GM12878 (cell line): ENCODE measurements at regions of chr13 and their contacts with region 1.

Region 1: GRCh38 chr13:79003989-79004898 is 345.3 kb upstream of the OBI1 start:
- DNase-seq: no peak
- ATAC-seq: peak; percentile 69
- H3K4me3 ChIP-seq: no peak overlapping the region
- H3K27ac ChIP-seq: no peak overlapping the region
- H3K4me1 ChIP-seq: no peaks in the 10 kb centered on the region
- H3K27me3 ChIP-seq: no peaks in the 10 kb centered on the region
- CTCF ChIP-seq: no peak
- EP300 ChIP-seq: peak; percentile 69 to 78; a peak in 2 of 4 replicates
- POLR2A ChIP-seq: no peak
- RAD21 ChIP-seq: no peak

Region 2: DNA sequence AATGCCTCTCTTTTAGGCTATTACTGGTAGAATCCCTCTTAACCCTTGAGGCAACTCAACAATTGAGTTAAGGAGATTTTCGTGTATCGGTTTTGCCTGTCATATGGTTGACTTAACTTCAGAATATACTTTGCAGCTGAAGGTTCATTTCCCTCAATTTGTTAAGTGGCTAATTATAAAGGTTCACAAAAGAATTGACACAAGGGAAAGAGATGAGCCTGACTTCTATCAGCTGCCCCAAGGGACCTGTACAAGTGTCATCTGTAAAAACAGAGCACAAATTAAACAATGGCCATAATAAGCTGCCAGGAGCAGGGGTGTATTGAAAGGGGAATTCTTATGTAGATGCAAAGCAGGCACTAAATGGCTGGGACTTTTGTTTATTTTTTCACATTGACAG is 10.5 kb before region 1 on chr13:
- CTCF ChIA-PET with region 1: interaction called, 12 read pairs
- POLR2A ChIA-PET with region 1: interaction called, 32 read pairs
- RAD21 ChIA-PET with region 1: interaction called, 69 read pairs
- SMC1A ChIA-PET with region 1: interaction called, 74 read pairs
- in situ Hi-C with region 1: no loop called
- intact Hi-C with region 1: no loop called
- DNase-seq: peak; percentile 21
- ATAC-seq: peak; percentile 76
- H3K4me3 ChIP-seq: no peak overlapping the region
- H3K27ac ChIP-seq: no peak overlapping the region
- H3K4me1 ChIP-seq: no peaks in the 10 kb centered on the region
- H3K27me3 ChIP-seq: no peaks in the 10 kb centered on the region
- CTCF ChIP-seq: no peak
- EP300 ChIP-seq: peak; percentile 75 to 79; a peak in 3 of 4 replicates
- POLR2A ChIP-seq: no peak
- RAD21 ChIP-seq: no peak

Region 3: DNA sequence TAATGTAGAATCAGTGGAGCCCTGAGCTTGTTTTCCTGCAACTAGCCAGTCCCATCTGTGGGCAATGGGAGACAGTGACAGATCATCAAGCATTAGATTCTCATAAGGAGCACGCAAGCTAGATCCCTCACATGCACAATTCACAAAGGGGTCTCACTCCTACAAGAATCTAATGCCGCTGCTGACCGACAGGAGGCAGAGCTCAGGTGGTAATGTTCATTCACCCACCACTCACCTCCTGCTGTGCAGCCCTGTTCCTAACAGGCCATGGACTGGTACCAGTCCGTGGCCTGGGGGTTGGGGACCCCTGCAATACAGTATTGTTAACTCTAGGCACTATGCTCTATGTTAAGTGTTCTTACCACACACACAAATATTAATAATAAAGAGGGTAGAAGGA is 39.0 kb after region 1 on chr13:
- CTCF ChIA-PET with region 1: no interaction called
- POLR2A ChIA-PET with region 1: no interaction called
- RAD21 ChIA-PET with region 1: interaction called, 12 read pairs
- SMC1A ChIA-PET with region 1: interaction called, 14 read pairs
- in situ Hi-C with region 1: no loop called
- intact Hi-C with region 1: no loop called
- DNase-seq: no peak
- ATAC-seq: no peak
- H3K4me3 ChIP-seq: no peak overlapping the region
- H3K27ac ChIP-seq: no peak overlapping the region
- H3K4me1 ChIP-seq: no peaks in the 10 kb centered on the region
- H3K27me3 ChIP-seq: no peaks in the 10 kb centered on the region
- CTCF ChIP-seq: no peak
- EP300 ChIP-seq: no peak
- POLR2A ChIP-seq: no peak
- RAD21 ChIP-seq: no peak

Region 4: DNA sequence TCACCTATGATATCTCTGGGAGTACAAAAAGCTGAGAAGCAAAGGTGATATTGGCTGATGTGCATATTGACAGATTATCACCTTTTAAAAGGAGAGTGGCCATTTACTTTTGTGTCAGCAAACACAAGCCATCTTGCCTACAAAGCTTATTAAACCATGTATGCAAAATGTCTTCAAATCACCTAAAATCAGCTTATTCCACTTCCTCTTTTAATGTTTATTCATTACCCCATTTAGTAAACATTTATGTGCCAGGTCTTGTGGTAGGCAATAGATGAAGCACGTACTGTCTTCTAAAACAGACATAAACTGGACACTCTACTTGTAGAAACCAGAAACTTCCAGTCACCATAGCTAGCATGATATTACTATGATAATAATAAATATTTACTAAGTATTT is 47.2 kb after region 1 on chr13:
- CTCF ChIA-PET with region 1: interaction called, 6 read pairs
- POLR2A ChIA-PET with region 1: interaction called, 3 read pairs
- RAD21 ChIA-PET with region 1: interaction called, 12 read pairs
- SMC1A ChIA-PET with region 1: interaction called, 58 read pairs
- in situ Hi-C with region 1: no loop called
- intact Hi-C with region 1: no loop called
- DNase-seq: no peak
- ATAC-seq: peak; percentile 31
- H3K4me3 ChIP-seq: no peak overlapping the region
- H3K27ac ChIP-seq: no peak overlapping the region
- H3K4me1 ChIP-seq: no peaks in the 10 kb centered on the region
- H3K27me3 ChIP-seq: no peaks in the 10 kb centered on the region; a peak in 1 of 4 replicates
- CTCF ChIP-seq: no peak
- EP300 ChIP-seq: no peak
- POLR2A ChIP-seq: no peak
- RAD21 ChIP-seq: no peak

Region 5: DNA sequence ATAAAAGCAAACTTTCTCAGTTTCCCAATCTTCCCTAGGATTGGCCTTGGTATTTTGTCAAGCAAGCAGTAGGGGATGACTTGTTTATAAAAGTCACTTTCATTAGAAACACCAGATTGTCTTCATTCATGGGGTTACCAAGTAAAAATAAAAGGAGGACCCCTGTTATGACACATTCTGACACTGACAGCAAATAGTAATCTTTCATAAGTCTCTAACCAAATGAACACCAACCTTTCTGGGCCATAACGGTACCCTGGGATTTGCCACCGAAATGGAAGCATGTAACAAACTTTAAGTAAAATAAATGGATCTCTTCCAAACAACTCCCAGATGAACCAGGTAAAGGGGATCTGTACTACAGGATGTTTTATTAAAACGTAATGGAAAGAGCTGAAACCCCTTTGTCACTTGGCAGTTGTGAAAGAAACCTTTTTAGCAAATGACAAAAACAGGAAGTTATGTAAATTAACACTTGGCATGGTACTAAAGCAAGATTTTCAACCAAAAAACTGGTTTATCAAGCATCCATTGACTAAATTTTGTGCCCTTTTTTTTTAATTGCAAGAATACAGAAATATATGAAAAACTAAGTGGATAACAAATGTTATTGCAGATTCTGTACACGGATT is 66.2 kb after region 1 on chr13:
- CTCF ChIA-PET with region 1: no interaction called
- POLR2A ChIA-PET with region 1: no interaction called
- RAD21 ChIA-PET with region 1: no interaction called
- SMC1A ChIA-PET with region 1: no interaction called
- in situ Hi-C with region 1: no loop called
- intact Hi-C with region 1: no loop called
- DNase-seq: peak; percentile 2
- ATAC-seq: peak; percentile 54
- H3K4me3 ChIP-seq: no peak overlapping the region
- H3K27ac ChIP-seq: no peak overlapping the region
- H3K4me1 ChIP-seq: peaks cover 9% of the 10 kb centered on the region; the same call in 1 of the 2 replicates
- H3K27me3 ChIP-seq: no peaks in the 10 kb centered on the region
- CTCF ChIP-seq: no peak
- EP300 ChIP-seq: no peak
- POLR2A ChIP-seq: no peak
- RAD21 ChIP-seq: no peak

Region 6: GRCh38 chr13:79918620-79919019 is 914.4 kb after region 1 on chr13:
- CTCF ChIA-PET with region 1: no interaction called
- POLR2A ChIA-PET with region 1: no interaction called
- RAD21 ChIA-PET with region 1: no interaction called
- SMC1A ChIA-PET with region 1: no interaction called
- in situ Hi-C with region 1: no loop called
- intact Hi-C with region 1: no loop called
- DNase-seq: no peak
- ATAC-seq: peak; percentile 69
- H3K4me3 ChIP-seq: no peak overlapping the region
- H3K27ac ChIP-seq: no peak overlapping the region
- H3K4me1 ChIP-seq: no peaks in the 10 kb centered on the region
- H3K27me3 ChIP-seq: no peaks in the 10 kb centered on the region
- CTCF ChIP-seq: no peak
- EP300 ChIP-seq: no peak
- POLR2A ChIP-seq: no peak
- RAD21 ChIP-seq: no peak